ENCODE measurements at regions of chr15 and their contacts with region 1.

Region 1: GRCh38 chr15:50686468-50687301 is at the start of gene TRPM7:
- DNase-seq: peak; percentile 92
- ATAC-seq: peak; percentile 80
- H3K4me3 Mint-ChIP-seq: peak within 1 kb of the TSS; percentile 99
- H3K27ac Mint-ChIP-seq: peak within 1 kb of the TSS; percentile 92
- H3K4me1 Mint-ChIP-seq: peaks cover 58% of the 10 kb centered on the region
- H3K27me3 Mint-ChIP-seq: no peaks in the 10 kb centered on the region
- CTCF ChIP-seq: no peak
- total RNA-seq, gene TRPM7: 59.4 and 64.7 TPM in 2 replicates

Region 2: DNA sequence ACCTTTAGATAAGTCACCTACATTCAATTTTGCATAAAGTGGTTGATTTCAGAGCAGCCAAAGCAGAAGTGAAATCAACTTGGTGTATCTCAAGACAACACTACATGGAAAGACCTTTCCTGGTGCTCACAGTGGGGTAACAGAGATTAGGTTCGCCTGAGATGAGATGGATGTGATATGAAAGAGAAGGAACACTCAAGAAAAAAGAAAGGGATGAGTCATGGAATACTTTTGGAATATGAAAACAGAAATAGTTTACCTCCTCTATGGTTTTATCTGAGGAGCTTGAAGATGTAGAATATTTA is 168.4 kb after region 1 on chr15:
- CTCF ChIA-PET with region 1: no interaction called
- POLR2A ChIA-PET with region 1: no interaction called
- intact Hi-C with region 1: loop called (anchors 1 kb)
- DNase-seq: no peak
- ATAC-seq: peak; percentile 94
- H3K4me3 Mint-ChIP-seq: no peak overlapping the region
- H3K27ac Mint-ChIP-seq: peak overlapping the region; percentile 36
- H3K4me1 Mint-ChIP-seq: peaks cover 16% of the 10 kb centered on the region
- H3K27me3 Mint-ChIP-seq: peaks cover 3% of the 10 kb centered on the region
- CTCF ChIP-seq: no peak

Measured in activated B cell treated with CpG ODN at 0.5 μM for 24 hours (primary cell).